ENCODE measurements at regions of chr11 and their contacts with region 1.

Region 1: DNA sequence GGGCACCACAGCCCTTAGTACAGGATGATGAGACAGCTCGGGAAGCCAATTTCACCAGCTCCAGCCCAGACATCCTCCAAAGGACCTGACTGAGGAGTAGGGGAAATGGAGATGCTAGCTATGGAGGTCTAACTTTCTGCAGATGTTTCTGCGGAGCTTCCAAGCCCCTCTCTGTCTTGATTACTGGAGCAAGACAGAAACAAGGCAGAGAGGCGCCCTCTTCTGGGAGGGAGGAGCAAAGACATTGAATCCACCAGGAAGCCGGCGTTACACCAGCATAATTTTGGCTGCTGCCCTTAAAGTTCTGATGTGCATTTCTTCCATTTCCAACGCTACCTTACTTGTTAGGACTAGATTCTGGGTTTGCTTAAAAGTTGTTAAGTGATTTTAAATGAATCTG is 107.3 kb upstream of the HSD17B12 start:
- DNase-seq: peak; percentile 39
- ATAC-seq: no peak
- H3K4me3 Mint-ChIP-seq: no peak overlapping the region
- H3K27ac Mint-ChIP-seq: no peak overlapping the region
- H3K4me1 Mint-ChIP-seq: peaks cover 30% of the 10 kb centered on the region
- H3K27me3 Mint-ChIP-seq: peaks cover 80% of the 10 kb centered on the region

Region 2: GRCh38 chr11:43419460-43419859 is 153.8 kb before region 1 on chr11:
- CTCF ChIA-PET with region 1: no interaction called
- POLR2A ChIA-PET with region 1: no interaction called
- DNase-seq: peak; percentile 70
- ATAC-seq: peak; percentile 65
- H3K4me3 Mint-ChIP-seq: no peak overlapping the region
- H3K27ac Mint-ChIP-seq: no peak overlapping the region
- H3K4me1 Mint-ChIP-seq: peaks cover 3% of the 10 kb centered on the region
- H3K27me3 Mint-ChIP-seq: no peaks in the 10 kb centered on the region

Region 3: GRCh38 chr11:43523632-43524031 is 49.6 kb before region 1 on chr11:
- CTCF ChIA-PET with region 1: no interaction called
- POLR2A ChIA-PET with region 1: no interaction called
- DNase-seq: no peak
- ATAC-seq: no peak
- H3K4me3 Mint-ChIP-seq: no peak overlapping the region
- H3K27ac Mint-ChIP-seq: no peak overlapping the region
- H3K4me1 Mint-ChIP-seq: no peaks in the 10 kb centered on the region
- H3K27me3 Mint-ChIP-seq: no peaks in the 10 kb centered on the region

Region 4: DNA sequence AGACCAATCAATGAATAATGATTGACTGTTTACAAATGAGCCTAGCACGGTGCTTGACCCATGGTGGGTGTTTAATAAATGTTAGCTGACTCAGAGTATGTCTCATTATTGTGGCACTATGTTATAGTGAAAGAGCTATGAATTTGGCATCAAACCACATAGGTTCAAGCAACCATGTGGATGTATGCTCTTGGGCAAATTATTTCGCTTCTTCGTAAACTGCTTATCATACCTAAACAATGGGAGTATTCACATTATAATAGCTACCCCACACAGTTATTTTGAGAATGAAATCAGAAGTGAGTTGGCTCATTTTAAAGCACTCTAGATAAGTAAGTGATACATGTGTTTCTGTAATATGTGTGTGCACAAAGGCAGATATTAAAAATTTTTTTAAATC is 11.4 kb before region 1 on chr11:
- CTCF ChIA-PET with region 1: interaction called, 10 read pairs
- POLR2A ChIA-PET with region 1: interaction called, 3 read pairs
- DNase-seq: no peak
- ATAC-seq: no peak
- H3K4me3 Mint-ChIP-seq: no peak overlapping the region
- H3K27ac Mint-ChIP-seq: no peak overlapping the region
- H3K4me1 Mint-ChIP-seq: no peaks in the 10 kb centered on the region
- H3K27me3 Mint-ChIP-seq: peaks cover 38% of the 10 kb centered on the region

Region 5: GRCh38 chr11:43632171-43632570 is 58.9 kb after region 1 on chr11:
- CTCF ChIA-PET with region 1: no interaction called
- POLR2A ChIA-PET with region 1: no interaction called
- DNase-seq: no peak
- ATAC-seq: no peak
- H3K4me3 Mint-ChIP-seq: no peak overlapping the region
- H3K27ac Mint-ChIP-seq: no peak overlapping the region
- H3K4me1 Mint-ChIP-seq: no peaks in the 10 kb centered on the region
- H3K27me3 Mint-ChIP-seq: peaks cover 42% of the 10 kb centered on the region

Measured in activated CD8-positive, alpha-beta T cell treated with anti-CD3 and anti-CD28 coated beads, Interleukin-2, amount 10 ng/mL, durations not matched to agents 7 days and 5 days (primary cell).